MCF 10A (cell line): ENCODE measurements at regions of chr7 and their contacts with region 1.

Region 1: GRCh38 chr7:123367484-123368122 is 166.8 kb downstream of the IQUB start:
- DNase-seq: peak; percentile 60
- H3K4me3 Mint-ChIP-seq: no peak overlapping the region
- H3K27ac Mint-ChIP-seq: no peak overlapping the region
- H3K4me1 Mint-ChIP-seq: no peaks in the 10 kb centered on the region
- H3K27me3 Mint-ChIP-seq: no peaks in the 10 kb centered on the region
- CTCF ChIP-seq: peak; percentile 87

Region 2: DNA sequence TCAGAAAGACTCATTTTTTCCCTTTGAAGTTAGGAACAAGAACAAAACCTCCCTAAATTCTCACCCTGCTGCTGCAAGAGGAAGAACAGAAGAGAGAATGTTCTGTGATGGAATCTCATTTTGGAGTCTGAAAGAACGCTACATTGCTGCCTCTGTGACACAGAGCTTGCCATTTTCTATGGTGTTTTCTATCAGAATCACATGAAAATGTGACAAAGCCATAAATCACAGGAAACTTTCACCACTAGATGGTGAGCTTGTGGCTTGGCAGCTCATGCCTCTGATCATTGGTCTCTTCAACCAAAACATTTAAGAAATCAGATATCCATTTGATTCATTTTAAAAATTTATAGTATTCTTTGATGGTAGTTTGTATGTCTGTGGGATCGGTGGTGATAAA is 564.3 kb before region 1 on chr7:
- CTCF ChIA-PET with region 1: interaction called, 13 read pairs
- POLR2A ChIA-PET with region 1: interaction called, 3 read pairs
- intact Hi-C with region 1: loop called (anchors 2 kb)
- DNase-seq: peak; percentile 52
- H3K4me3 Mint-ChIP-seq: no peak overlapping the region
- H3K27ac Mint-ChIP-seq: no peak overlapping the region
- H3K4me1 Mint-ChIP-seq: no peaks in the 10 kb centered on the region
- H3K27me3 Mint-ChIP-seq: no peaks in the 10 kb centered on the region
- CTCF ChIP-seq: peak; percentile 38

Region 3: GRCh38 chr7:123208793-123209192 is 158.8 kb before region 1 on chr7:
- CTCF ChIA-PET with region 1: interaction called, 88 read pairs
- POLR2A ChIA-PET with region 1: interaction called, 4 read pairs
- intact Hi-C with region 1: loop called (anchors 1 kb)
- DNase-seq: peak; percentile 39
- H3K4me3 Mint-ChIP-seq: no peak overlapping the region
- H3K27ac Mint-ChIP-seq: no peak overlapping the region
- H3K4me1 Mint-ChIP-seq: peaks cover 6% of the 10 kb centered on the region
- H3K27me3 Mint-ChIP-seq: no peaks in the 10 kb centered on the region
- CTCF ChIP-seq: no peak

Region 4: DNA sequence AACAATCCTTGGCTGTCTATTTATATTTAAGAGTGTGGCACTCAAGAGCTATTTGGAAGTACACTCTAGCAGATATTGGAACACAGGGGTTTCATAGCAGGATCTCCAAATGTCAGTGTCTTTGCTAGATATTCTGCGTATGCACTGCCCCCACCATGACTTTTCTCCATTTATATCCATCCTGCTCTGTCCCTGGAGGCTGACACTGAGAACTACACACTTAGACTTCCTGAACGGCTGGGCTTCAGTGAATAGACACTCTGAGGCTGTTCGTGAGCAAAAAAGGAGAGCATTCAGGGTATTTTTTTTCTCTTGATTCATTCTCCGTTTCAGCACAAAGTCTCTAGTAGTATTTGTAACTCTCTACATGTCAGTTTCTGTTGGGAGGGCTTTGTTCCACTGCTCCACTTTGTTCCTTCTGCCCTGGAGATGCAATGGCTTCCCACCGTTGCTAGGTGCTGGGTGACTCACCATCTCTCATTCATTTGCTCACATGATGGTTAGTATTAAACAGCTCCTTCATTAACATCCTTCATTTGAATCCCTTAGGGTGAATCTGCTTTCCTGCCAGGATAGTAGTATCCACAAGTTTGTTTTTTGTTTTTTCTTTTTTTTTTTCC is 11.9 kb before region 1 on chr7:
- CTCF ChIA-PET with region 1: interaction called, 21 read pairs
- POLR2A ChIA-PET with region 1: interaction called, 5 read pairs
- intact Hi-C with region 1: no loop called
- DNase-seq: peak; percentile 27
- H3K4me3 Mint-ChIP-seq: no peak overlapping the region
- H3K27ac Mint-ChIP-seq: no peak overlapping the region
- H3K4me1 Mint-ChIP-seq: no peaks in the 10 kb centered on the region
- H3K27me3 Mint-ChIP-seq: no peaks in the 10 kb centered on the region
- CTCF ChIP-seq: no peak

Region 5: GRCh38 chr7:123888192-123888591 is 520.6 kb after region 1 on chr7:
- CTCF ChIA-PET with region 1: no interaction called
- POLR2A ChIA-PET with region 1: no interaction called
- intact Hi-C with region 1: no loop called
- DNase-seq: no peak
- H3K4me3 Mint-ChIP-seq: no peak overlapping the region
- H3K27ac Mint-ChIP-seq: no peak overlapping the region
- H3K4me1 Mint-ChIP-seq: no peaks in the 10 kb centered on the region
- H3K27me3 Mint-ChIP-seq: no peaks in the 10 kb centered on the region
- CTCF ChIP-seq: no peak